Activated CD4-positive, alpha-beta T cell treated with anti-CD3 and anti-CD28 coated beads for 36 hours (primary cell): ENCODE measurements at regions of chr15 and their contacts with region 1.

Region 1: DNA sequence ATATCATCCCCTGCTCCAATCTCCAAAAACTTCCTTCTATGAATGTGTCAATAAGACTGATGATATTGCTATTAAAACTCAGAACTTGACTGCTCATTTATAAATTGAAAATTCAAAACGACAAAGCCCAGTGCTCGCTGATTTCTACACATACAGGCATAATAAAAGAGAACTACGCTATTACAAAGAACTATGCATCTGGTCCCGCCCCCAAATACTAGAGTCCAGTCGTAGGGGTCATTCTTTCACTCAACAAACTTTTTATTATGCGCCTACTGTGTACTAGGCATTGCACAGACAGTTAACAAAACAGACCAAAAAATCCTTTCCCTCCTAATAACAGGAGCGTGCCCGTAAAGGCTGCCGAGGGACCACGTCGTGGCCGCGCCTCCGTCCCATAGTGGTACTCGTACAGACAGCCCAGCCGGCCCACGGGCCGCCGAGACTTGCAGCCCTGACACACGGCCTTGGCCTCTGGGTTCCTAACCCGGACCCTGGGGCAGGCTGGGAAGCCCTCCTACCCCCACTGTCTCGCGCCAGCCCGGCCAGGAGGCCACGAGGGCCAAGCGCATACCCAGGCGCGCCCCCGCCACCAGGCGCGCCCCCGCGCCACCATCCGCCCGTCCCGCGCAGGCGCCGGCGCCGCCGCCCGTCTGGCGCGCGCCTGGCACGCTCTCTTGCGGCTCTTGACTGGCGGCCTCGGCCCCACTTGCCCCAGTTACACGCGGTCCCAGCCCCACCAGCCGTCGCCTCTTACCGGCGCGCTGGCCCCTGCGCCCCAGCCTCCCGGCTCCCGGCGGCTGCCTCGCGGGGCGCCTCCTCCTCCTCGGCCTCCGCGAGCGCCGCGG is 757 bp downstream of the AVEN start:
- DNase-seq: peak; percentile 88
- ATAC-seq: peak; percentile 76
- H3K4me3 Mint-ChIP-seq: peak overlapping the region; percentile 81
- H3K27ac Mint-ChIP-seq: peak overlapping the region; percentile 96
- H3K4me1 Mint-ChIP-seq: peaks cover 23% of the 10 kb centered on the region
- H3K27me3 Mint-ChIP-seq: no peaks in the 10 kb centered on the region

Region 2: GRCh38 chr15:33860754-33861153 is 177.5 kb before region 1 on chr15:
- CTCF ChIA-PET with region 1: no interaction called
- POLR2A ChIA-PET with region 1: interaction called, 10 read pairs
- intact Hi-C with region 1: no loop called
- DNase-seq: no peak
- ATAC-seq: no peak
- H3K4me3 Mint-ChIP-seq: no peak overlapping the region
- H3K27ac Mint-ChIP-seq: no peak overlapping the region
- H3K4me1 Mint-ChIP-seq: peaks cover 9% of the 10 kb centered on the region
- H3K27me3 Mint-ChIP-seq: no peaks in the 10 kb centered on the region

Region 3: GRCh38 chr15:34085746-34086145 is 47.5 kb after region 1 on chr15:
- CTCF ChIA-PET with region 1: no interaction called
- POLR2A ChIA-PET with region 1: no interaction called
- intact Hi-C with region 1: no loop called
- DNase-seq: no peak
- ATAC-seq: no peak
- H3K4me3 Mint-ChIP-seq: no peak overlapping the region
- H3K27ac Mint-ChIP-seq: no peak overlapping the region
- H3K4me1 Mint-ChIP-seq: no peaks in the 10 kb centered on the region
- H3K27me3 Mint-ChIP-seq: no peaks in the 10 kb centered on the region

Region 4: GRCh38 chr15:34101366-34102175 is 63.3 kb after region 1 on chr15 and contains the starts of genes EMC7 and PGBD4:
- CTCF ChIA-PET with region 1: no interaction called
- POLR2A ChIA-PET with region 1: interaction called, 11 read pairs
- intact Hi-C with region 1: loop called (anchors 1 kb)
- DNase-seq: peak; percentile 99
- ATAC-seq: peak; percentile 99
- H3K4me3 Mint-ChIP-seq: peak within 1 kb of the TSS; percentile 100
- H3K27ac Mint-ChIP-seq: peak within 1 kb of the TSS; percentile 99
- H3K4me1 Mint-ChIP-seq: peaks cover 40% of the 10 kb centered on the region
- H3K27me3 Mint-ChIP-seq: no peaks in the 10 kb centered on the region
- total RNA-seq, gene EMC7: 46.7 to 48.5 TPM
- total RNA-seq, gene PGBD4: 2.3 to 2.4 TPM

Region 5: DNA sequence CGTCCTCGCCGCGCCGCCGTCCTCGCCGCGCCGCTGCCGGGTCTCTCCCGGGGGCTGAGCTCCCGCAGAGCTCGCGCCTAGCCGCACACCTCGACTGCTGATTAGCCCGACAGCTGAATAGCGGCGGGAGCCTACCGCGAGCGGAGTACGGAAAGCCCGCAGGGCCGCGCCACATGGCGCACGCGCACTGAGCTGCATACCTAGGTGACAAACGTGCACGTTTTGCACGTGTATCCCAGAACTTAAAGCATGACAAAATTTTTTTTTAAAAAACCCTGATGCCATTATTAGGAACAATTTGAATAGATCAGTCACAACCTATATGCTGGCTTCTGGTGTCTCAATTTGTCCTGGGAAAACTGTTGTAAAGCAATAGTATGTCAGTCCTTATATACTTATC is 399.4 kb after region 1 on chr15 and contains the start of gene GOLGA8A:
- CTCF ChIA-PET with region 1: no interaction called
- POLR2A ChIA-PET with region 1: no interaction called
- intact Hi-C with region 1: loop called in 1 of 2 experiments (anchors 2 kb)
- DNase-seq: peak; percentile 94
- ATAC-seq: peak; percentile 85
- H3K4me3 Mint-ChIP-seq: peak within 1 kb of the TSS; percentile 86
- H3K27ac Mint-ChIP-seq: peak within 1 kb of the TSS; percentile 95
- H3K4me1 Mint-ChIP-seq: peaks cover 18% of the 10 kb centered on the region
- H3K27me3 Mint-ChIP-seq: peaks cover under 1% of the 10 kb centered on the region
- total RNA-seq, gene GOLGA8A: 147 to 165 TPM

Region 6: GRCh38 chr15:35545824-35546510 is 1507.7 kb after region 1 on chr15 and contains the start of gene DPH6:
- CTCF ChIA-PET with region 1: no interaction called
- POLR2A ChIA-PET with region 1: no interaction called
- intact Hi-C with region 1: loop called in 1 of 2 experiments (anchors 5 kb)
- DNase-seq: peak; percentile 87
- ATAC-seq: peak; percentile 89
- H3K4me3 Mint-ChIP-seq: peak within 1 kb of the TSS; percentile 95
- H3K27ac Mint-ChIP-seq: peak within 1 kb of the TSS; percentile 99
- H3K4me1 Mint-ChIP-seq: peaks cover 23% of the 10 kb centered on the region
- H3K27me3 Mint-ChIP-seq: no peaks in the 10 kb centered on the region
- total RNA-seq, gene DPH6: 8.1 to 14.0 TPM